Gastrocnemius medialis (tissue), 4 donors: ENCODE measurements at regions of chr18 and their contacts with region 1.

Region 1: DNA sequence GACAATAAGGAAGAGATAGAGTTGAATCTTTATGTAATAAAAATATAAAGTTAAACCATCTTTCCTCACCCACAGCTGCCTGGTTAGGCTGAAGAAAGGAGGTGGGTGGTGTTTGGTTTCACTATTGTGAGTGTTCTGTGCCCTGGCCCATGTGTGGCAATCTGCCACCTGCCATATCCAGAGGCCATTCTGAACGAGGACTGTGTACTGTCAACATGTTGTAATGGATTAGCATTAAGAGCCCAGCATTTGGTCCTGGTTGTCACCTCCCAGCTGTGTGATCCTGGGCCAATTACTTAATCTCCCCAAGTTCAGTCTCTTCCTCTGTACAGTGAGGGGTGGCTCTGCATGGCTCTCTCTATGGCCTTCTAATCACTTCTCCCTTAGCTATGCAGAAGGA is 118.2 kb upstream of the SEC11C start:
- DNase-seq: peak; percentile 62 to 86
- ATAC-seq: peak; percentile 86 to 96
- H3K4me3 ChIP-seq: no peak overlapping the region
- H3K27ac ChIP-seq: peak overlapping the region; percentile 69 to 88 (median 78)
- H3K4me1 ChIP-seq: peaks cover 33 to 45% of the 10 kb centered on the region in 2 donors
- H3K27me3 ChIP-seq: no peaks in the 10 kb centered on the region
- CTCF ChIP-seq: no peak
- POLR2A ChIP-seq: no peak

Region 2: DNA sequence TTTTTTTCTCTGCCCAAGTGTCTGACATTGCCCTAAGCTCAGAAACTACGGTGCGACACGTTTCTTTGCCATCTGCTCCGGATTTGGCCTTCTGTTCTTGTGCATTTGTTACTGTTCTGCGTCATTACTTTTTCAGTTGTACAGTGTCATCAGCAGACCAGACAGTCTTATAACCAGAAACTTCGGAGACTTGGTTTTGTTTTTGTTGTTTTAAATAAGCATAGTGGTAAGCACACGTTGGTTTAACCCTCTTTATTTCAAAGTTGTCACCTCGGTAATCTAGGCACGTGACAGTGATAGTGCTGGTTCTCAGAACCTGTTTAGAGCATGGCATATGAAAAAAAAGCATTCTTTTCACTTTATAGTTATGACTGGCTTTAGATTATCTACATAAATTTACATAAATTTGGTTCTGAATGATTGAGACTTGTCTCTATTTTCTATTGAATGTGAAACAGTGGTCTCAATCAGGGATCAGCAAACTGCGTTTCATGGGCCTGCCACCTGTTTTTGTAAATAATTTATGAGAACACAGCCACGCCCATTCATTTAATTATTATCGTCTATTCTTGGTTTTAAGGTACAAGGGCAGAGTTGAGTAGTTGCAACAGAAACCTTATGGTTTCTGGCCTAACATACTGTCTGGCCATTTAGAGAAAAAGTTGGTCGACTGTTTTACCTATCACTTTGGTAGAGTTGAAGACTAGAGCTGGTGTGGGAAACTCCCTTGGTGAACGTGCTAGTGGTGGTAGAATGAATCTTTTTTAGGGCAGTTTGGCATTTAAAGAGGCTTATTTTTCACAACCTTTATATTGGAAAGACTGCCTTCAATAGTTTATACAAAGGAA is 50.3 kb before region 1 on chr18:
- in situ Hi-C with region 1: no loop called
- intact Hi-C with region 1: no loop called
- DNase-seq: no peak
- ATAC-seq: peak in 1 of 2 donors; percentile 29
- H3K4me3 ChIP-seq: no peak overlapping the region
- H3K27ac ChIP-seq: peak overlapping the region; percentile 29 to 52 (median 49)
- H3K4me1 ChIP-seq: peaks cover 36% of the 10 kb centered on the region in 2 donors
- H3K27me3 ChIP-seq: no peaks in the 10 kb centered on the region
- CTCF ChIP-seq: no peak
- POLR2A ChIP-seq: no peak

Region 3: DNA sequence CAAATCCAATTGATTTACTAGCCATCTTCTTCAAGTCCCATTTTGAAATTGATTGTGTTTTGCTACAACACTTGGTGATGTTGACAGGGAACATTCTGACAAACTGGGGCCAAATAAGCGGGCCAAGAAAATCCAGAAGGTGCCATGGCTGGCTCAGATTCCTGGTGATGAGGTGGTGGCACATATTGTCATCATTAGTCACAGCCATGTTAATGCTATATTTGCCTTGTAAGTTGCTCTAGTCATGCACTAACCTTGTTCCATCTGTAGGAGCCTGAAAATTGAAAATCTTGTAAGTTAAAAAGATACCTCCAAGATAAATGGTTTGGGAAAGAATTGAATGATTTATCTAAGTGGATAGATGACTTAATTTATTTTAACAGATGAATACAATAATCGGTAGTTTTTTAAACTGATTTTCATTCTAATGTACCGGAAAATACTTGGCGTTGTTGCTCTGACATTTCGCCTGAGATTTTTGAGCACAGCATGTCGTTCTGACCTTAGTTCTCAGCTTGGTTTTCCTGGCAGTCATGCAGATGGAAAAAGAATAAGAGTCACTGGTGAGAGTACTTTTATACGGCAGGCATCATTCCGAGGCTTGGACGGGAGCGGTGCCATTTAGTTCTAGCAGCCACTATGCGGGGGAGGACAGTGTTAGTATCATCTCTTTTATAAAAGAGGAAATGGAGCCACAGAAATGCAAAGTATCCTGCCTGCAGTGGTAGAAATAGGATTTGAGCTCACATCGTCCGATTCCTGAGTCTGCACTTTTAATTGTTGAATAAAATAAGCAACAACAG is 22.9 kb before region 1 on chr18:
- in situ Hi-C with region 1: no loop called
- intact Hi-C with region 1: loop called (anchors 2 kb)
- DNase-seq: peak; percentile 77 to 91
- ATAC-seq: peak; percentile 95 to 96
- H3K4me3 ChIP-seq: peak overlapping the region; percentile 11 to 42 (median 39)
- H3K27ac ChIP-seq: peak overlapping the region; percentile 90 to 94 (median 91)
- H3K4me1 ChIP-seq: peaks cover 31 to 50% of the 10 kb centered on the region in 2 donors
- H3K27me3 ChIP-seq: no peaks in the 10 kb centered on the region
- CTCF ChIP-seq: peak in 4 of 5 experiments; percentile 17 to 63 (median 28)
- POLR2A ChIP-seq: peak in 1 of 2 donors; percentile 49